ENCODE measurements at regions of chr19 and their contacts with region 1.

Region 1: DNA sequence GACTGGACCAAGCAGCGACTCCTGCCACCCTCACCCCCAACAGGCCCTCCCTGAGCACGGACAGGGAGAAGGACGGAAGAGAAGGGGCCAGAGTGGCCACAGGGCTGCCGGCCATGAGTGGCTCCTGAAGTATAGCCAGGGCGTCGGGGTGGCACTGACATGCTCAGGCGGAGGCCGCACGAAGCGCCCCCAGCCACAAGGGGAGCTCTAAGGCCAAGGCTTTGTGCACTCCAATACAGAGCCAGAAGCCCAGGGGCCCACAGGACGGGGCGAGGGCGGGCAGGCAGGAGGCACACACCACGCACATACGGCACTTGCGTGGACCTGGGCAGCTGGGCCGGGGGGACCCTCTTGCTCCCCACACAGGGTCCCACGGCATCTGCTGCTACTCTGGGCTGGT is 52.0 kb downstream of the KLF2 start:
- DNase-seq: peak; percentile 80

Region 2: GRCh38 chr19:16180611-16181010 is 196.0 kb before region 1 on chr19:
- intact Hi-C with region 1: no loop called
- DNase-seq: no peak

Region 3: GRCh38 chr19:16338470-16339360 is 37.9 kb before region 1 on chr19:
- intact Hi-C with region 1: loop called (anchors 5 kb)
- DNase-seq: peak; percentile 91

Region 4: GRCh38 chr19:17226002-17226933 is 849.6 kb after region 1 on chr19 and contains the start of gene OCEL1:
- intact Hi-C with region 1: no loop called
- DNase-seq: peak; percentile 100
- total RNA-seq, gene OCEL1: 14.8 to 18.0 TPM